Caco-2 (cell line): ENCODE measurements at regions of chr11 and their contacts with region 1.

Region 1: DNA sequence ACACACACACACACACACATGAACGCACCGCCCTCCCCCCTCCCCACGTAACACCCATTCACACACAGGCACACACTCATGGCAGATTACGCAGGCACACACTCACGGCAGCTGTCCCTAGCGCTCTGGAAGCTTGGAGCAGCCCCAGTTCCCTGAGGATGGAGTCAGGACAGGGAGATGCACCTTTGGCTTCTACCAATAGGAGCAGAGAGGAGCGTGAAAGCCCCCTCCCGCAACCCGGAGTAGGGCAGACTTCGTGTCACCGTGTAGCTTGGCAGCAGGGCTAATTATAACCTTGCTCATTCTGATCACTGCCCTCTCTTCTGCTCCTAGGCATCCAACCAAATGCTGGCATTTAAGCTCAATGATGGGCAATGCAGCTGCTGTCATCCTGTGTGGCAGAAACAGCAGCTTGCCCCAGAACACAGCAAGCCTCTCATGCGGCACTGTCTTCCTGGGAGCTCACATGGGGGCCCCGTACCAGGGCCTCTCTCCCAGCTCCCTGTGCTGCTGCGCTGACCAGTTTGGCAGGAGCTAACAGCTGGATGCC is 31.9 kb downstream of the ANKK1 start:
- DNase-seq: no peak
- H3K4me3 ChIP-seq: no peak overlapping the region
- H3K4me3 Mint-ChIP-seq: no peak overlapping the region
- H3K27ac Mint-ChIP-seq: no peak overlapping the region
- H3K4me1 ChIP-seq: no peaks in the 10 kb centered on the region
- H3K4me1 Mint-ChIP-seq: no peaks in the 10 kb centered on the region
- H3K27me3 ChIP-seq: no peaks in the 10 kb centered on the region
- H3K27me3 Mint-ChIP-seq: no peaks in the 10 kb centered on the region
- CTCF ChIP-seq: no peak

Region 2: DNA sequence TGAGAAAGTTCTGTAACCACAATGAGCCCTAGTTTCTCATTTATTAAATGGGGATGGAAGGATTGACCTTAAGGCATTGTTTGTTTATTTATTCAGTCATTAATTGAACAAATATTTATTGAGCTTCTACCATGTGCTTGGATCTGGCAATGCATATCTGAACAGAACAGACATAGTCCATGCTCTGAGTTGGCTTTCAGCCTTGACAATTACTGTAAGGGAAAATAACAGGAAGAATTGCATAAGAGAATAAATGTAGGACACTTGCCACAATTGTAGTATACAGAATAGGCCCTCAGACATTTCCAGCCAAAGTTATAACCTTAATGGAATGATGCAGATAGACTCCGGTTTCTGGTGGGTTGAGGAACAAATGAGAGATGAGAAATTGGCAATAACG is 265.7 kb before region 1 on chr11:
- CTCF ChIA-PET with region 1: no interaction called
- POLR2A ChIA-PET with region 1: no interaction called
- intact Hi-C with region 1: no loop called
- DNase-seq: no peak
- H3K4me3 ChIP-seq: no peak overlapping the region
- H3K4me3 Mint-ChIP-seq: no peak overlapping the region
- H3K27ac Mint-ChIP-seq: no peak overlapping the region
- H3K4me1 ChIP-seq: no peaks in the 10 kb centered on the region
- H3K4me1 Mint-ChIP-seq: no peaks in the 10 kb centered on the region
- H3K27me3 ChIP-seq: peaks cover 4% of the 10 kb centered on the region
- H3K27me3 Mint-ChIP-seq: peaks cover 11% of the 10 kb centered on the region
- CTCF ChIP-seq: no peak

Region 3: GRCh38 chr11:113249491-113249763 is 170.1 kb before region 1 on chr11:
- CTCF ChIA-PET with region 1: no interaction called
- POLR2A ChIA-PET with region 1: no interaction called
- intact Hi-C with region 1: no loop called
- DNase-seq: peak in 1 of 2 experiments; percentile 25
- H3K4me3 ChIP-seq: no peak overlapping the region
- H3K4me3 Mint-ChIP-seq: no peak overlapping the region
- H3K27ac Mint-ChIP-seq: no peak overlapping the region
- H3K4me1 ChIP-seq: no peaks in the 10 kb centered on the region
- H3K4me1 Mint-ChIP-seq: no peaks in the 10 kb centered on the region
- H3K27me3 ChIP-seq: peaks cover 6% of the 10 kb centered on the region; the same call in 1 of the 2 replicates
- H3K27me3 Mint-ChIP-seq: peaks cover 50% of the 10 kb centered on the region
- CTCF ChIP-seq: peak; percentile 54 to 62

Region 4: DNA sequence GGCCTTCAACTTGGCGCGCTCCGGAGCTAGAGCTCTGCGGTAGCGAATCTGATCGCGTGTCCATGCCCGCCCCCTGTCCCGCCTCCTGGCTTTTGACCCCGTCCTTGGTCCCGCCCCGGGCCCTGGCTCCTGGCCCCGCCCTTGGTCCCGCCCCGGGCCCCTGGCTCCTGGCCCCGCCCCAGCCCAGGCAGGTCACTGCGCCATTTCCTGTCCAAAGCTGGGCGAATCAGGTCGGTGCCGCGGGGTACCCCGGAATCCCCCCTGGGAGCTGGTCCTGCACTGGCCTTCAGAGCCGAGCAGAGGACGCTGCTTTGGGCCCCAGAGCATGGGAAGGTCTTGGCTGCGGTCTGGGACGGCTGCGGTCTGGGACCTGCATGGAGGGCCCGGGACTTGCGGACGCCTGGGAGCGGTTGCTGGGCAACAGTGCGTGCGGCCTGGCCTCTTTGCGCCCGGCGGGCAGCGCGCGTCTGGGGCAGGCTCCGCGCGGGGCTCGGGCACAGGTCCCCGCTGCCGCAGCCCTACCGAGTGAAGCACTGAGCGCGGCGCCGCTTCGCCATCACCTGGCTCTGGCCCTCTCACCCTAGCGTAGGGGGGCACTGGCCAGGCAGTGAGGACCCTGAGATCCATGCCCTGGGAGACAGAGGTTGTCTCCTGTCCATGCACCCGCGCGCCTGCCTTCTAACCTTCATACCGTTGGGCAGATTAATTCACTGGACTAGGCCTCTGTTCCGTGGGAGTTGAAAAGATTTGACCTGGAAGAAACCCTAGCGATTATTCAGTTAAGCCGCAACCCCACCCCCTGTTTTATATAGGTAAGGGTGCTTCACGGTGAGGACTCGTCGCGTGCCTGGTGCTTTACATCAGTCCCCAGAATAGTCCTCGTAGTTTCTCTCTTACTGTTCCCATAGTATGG is 104.9 kb before region 1 on chr11 and contains the start of gene TTC12:
- CTCF ChIA-PET with region 1: no interaction called
- POLR2A ChIA-PET with region 1: no interaction called
- intact Hi-C with region 1: no loop called
- DNase-seq: peak; percentile 97 to 99
- H3K4me3 ChIP-seq: peak within 1 kb of the TSS; percentile 72
- H3K4me3 Mint-ChIP-seq: peak within 1 kb of the TSS; percentile 70
- H3K27ac Mint-ChIP-seq: peak within 1 kb of the TSS; percentile 35
- H3K4me1 ChIP-seq: peaks cover 10% of the 10 kb centered on the region
- H3K4me1 Mint-ChIP-seq: peaks cover 6% of the 10 kb centered on the region
- H3K27me3 ChIP-seq: no peaks in the 10 kb centered on the region
- H3K27me3 Mint-ChIP-seq: no peaks in the 10 kb centered on the region
- CTCF ChIP-seq: no peak
- total RNA-seq, gene TTC12: 19.4 and 20.8 TPM in 2 replicates

Region 5: GRCh38 chr11:113384551-113384950 is 35.0 kb before region 1 on chr11:
- CTCF ChIA-PET with region 1: no interaction called
- POLR2A ChIA-PET with region 1: no interaction called
- intact Hi-C with region 1: loop called (anchors 1 kb)
- DNase-seq: peak; percentile 86 to 90
- H3K4me3 ChIP-seq: no peak overlapping the region
- H3K4me3 Mint-ChIP-seq: no peak overlapping the region
- H3K27ac Mint-ChIP-seq: no peak overlapping the region
- H3K4me1 ChIP-seq: peaks cover 15% of the 10 kb centered on the region
- H3K4me1 Mint-ChIP-seq: no peaks in the 10 kb centered on the region
- H3K27me3 ChIP-seq: no peaks in the 10 kb centered on the region
- H3K27me3 Mint-ChIP-seq: no peaks in the 10 kb centered on the region
- CTCF ChIP-seq: no peak